ENCODE measurements at regions of chr15 and their contacts with region 1.

Region 1: DNA sequence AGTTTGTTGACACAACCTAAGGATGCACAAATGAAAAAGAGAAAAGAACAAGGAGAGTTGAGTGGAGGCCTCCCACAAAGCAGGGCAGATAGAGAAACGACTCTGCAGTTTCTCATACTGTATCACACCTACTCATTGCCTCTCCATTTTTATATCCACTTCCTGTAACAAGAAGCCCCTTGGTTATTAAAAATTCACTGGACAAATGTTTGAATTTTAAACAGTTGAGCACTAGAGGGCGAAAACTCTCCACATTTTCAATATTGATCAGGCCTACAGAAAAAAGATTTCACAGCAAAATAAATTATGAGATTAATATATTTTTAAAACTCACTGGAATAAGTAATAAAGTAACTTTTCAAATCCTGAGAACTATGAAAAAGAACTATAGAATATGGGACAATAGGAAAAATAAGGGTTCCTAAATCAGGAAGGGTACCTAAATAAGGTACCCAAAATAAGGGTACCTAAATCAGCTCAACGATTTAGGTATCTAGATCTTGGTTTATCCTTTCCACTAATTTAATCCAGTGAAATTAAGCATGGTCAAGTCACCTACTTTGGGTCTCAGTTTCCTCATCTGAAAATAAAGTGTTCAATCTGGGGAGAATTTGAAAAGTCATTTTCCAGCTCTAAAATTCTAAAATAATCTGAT is 47.0 kb upstream of the PPIB start:
- DNase-seq: peak; percentile 7
- ATAC-seq: peak; percentile 81
- H3K4me3 Mint-ChIP-seq: no peak overlapping the region
- H3K27ac Mint-ChIP-seq: no peak overlapping the region
- H3K4me1 Mint-ChIP-seq: peaks cover 8% of the 10 kb centered on the region
- H3K27me3 Mint-ChIP-seq: no peaks in the 10 kb centered on the region
- CTCF ChIP-seq: peak; percentile 68

Region 2: GRCh38 chr15:64232400-64232799 is 22.6 kb after region 1 on chr15:
- CTCF ChIA-PET with region 1: no interaction called
- POLR2A ChIA-PET with region 1: no interaction called
- intact Hi-C with region 1: no loop called
- DNase-seq: no peak
- ATAC-seq: no peak
- H3K4me3 Mint-ChIP-seq: no peak overlapping the region
- H3K27ac Mint-ChIP-seq: no peak overlapping the region
- H3K4me1 Mint-ChIP-seq: peaks cover 32% of the 10 kb centered on the region
- H3K27me3 Mint-ChIP-seq: no peaks in the 10 kb centered on the region
- CTCF ChIP-seq: no peak

Region 3: DNA sequence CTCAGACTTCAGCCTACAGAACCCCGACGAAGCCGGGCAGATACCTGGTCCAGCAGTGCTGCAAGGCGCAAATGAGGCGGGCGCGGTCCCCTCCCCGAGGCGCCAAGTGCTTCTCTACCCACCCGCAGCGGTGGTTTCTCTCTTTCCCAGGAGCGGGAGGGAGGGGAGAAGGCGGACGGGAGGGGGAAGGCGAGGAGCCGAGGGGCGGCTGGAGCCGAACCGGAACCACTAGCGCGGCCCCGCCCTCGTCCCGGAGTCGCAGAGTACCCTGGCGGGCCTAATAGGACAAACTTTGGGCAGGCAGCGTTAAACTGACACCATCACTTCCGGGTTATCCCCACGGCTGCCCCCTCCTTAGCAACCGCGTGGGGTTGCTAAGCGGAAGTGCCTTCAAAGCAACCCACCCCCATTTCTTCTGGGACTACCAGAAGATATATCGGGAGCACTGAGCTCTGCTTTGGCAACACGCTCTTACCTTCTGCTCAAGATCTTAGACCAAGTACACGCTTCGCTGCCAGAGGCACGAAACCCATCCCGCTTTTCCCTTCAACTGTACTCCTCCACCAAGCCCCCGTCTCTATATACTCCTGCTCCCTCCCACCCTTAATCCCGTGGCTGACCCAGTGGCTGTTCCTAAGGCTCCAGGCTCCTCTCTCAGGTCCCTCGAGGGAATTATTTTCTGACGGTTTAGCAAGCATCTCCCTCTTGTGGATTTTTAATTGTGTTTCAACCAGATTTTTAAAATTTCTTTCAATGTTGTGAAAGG is 146.3 kb after region 1 on chr15 and contains the start of gene CSNK1G1:
- CTCF ChIA-PET with region 1: interaction called, 3 read pairs
- POLR2A ChIA-PET with region 1: no interaction called
- intact Hi-C with region 1: loop called (anchors 10 kb)
- DNase-seq: peak; percentile 95
- ATAC-seq: peak; percentile 98
- H3K4me3 Mint-ChIP-seq: peak within 1 kb of the TSS; percentile 85
- H3K27ac Mint-ChIP-seq: peak within 1 kb of the TSS; percentile 91
- H3K4me1 Mint-ChIP-seq: peaks cover 15% of the 10 kb centered on the region
- H3K27me3 Mint-ChIP-seq: no peaks in the 10 kb centered on the region
- CTCF ChIP-seq: peak; percentile 31
- total RNA-seq, gene CSNK1G1: 16.7 to 20.4 TPM